Posterior cingulate gyrus (tissue), 11 donors: ENCODE measurements at regions of chr17 and their contacts with region 1.

Region 1: GRCh38 chr17:64420143-64420971 is 28.6 kb upstream of the MILR1 start:
- DNase-seq: peak in 1 of 10 donors; percentile 24

Region 2: DNA sequence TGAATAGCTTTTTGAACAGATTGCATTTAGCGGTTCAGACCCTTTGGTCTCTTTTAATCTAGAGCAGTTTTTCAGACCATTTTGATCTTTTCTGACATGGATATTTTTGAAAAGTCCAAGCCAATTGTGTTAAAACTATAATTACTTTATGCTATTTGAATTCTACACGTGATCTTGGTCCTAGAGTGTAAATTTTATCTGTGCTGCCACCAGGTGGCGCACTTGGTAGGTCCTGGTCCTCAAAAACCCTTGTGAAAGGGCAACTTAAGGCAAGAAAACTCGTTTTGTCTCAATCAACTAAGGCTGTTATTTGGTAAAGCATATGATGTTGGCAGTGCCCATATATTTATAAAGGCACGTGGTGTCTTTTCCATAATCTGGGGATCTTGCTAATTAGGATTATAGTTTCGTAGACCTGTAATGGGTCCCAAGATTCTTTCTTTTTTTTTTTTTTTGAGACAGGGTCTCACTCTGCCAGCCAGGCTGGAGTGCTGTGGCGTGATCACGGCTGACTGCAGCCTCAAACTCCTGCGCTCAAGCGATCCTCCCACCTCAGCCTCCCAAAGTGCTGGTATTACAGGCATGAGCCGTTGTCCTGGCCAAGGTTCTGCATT is 113.4 kb before region 1 on chr17:
- intact Hi-C with region 1: loop called (anchors 1 kb)
- DNase-seq: peak in 7 of 10 donors; percentile 40 to 88 (median 62)

Region 3: DNA sequence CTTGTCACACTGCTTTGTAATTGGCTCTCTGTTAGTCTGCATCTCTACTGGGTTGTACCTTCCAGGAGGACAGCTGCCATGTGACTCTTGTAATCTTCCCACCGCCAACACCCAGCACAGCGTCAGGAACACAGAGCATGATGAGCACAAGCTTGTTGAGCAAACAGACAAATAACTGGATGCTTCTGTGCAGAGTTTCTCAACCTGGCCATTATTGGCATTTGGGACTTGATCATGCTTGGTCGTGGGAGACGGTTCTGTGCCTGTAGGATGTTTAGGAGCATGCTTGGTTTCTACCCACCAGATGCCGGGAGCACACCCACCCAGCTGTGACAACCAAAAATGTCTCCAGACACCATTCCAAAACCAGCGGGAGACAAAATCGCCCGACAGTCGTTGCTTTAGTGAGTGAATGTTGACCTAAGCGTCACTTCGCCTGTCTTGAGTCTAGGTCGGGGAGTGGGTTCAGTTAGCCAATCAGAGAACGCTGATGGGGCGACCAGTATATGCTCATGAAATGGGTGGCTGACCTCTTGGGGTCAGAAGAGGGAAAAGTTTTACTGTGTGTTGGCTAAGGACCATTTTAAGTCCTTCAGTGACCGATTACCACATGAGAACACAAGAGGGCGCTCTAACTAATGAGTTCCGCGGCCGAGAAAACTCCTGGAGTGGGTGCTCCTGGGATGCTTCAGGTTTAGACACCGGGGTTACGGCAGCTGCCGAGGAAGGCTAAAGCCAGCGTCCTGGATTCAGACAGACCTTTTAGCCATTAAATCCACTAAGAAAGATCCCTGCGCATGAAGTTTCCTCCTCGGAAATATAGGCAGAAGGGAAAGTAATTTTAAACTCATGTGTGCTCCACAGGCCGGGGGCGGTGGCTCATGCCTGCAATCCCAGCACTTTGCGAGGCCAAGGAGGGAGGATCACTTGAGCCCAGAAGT is 99.5 kb before region 1 on chr17:
- intact Hi-C with region 1: loop called (anchors 2 kb)
- DNase-seq: peak in 7 of 10 donors; percentile 19 to 88 (median 50)

Region 4: GRCh38 chr17:64491034-64491859 is 70.9 kb after region 1 on chr17:
- intact Hi-C with region 1: loop called (anchors 5 kb)
- DNase-seq: no peak

Region 5: GRCh38 chr17:64648234-64648633 is 227.9 kb after region 1 on chr17:
- intact Hi-C with region 1: loop called (anchors 2 kb)
- DNase-seq: no peak